CD14-positive monocyte (primary cell): ENCODE measurements at regions of chr6 and their contacts with region 1.

Region 1: GRCh38 chr6:1396952-1397868 is 7.8 kb downstream of the FOXF2 start:
- DNase-seq: peak; percentile 48 to 68 (median 53)
- H3K4me3 ChIP-seq: no peak overlapping the region
- H3K4me3 Mint-ChIP-seq: peak overlapping the region in 1 of 2 donors; percentile 83
- H3K27ac ChIP-seq: no peak overlapping the region
- H3K27ac Mint-ChIP-seq: no peak overlapping the region
- H3K4me1 ChIP-seq: peaks cover 0 to 6% of the 10 kb centered on the region in 2 donors
- H3K4me1 Mint-ChIP-seq: peaks cover 8% of the 10 kb centered on the region
- H3K27me3 ChIP-seq: peaks cover 67 to 92% of the 10 kb centered on the region in 2 donors
- H3K27me3 Mint-ChIP-seq: peaks cover 60 to 79% (median 69%) of the 10 kb centered on the region in 3 donors
- CTCF ChIP-seq: peak; percentile 95

Region 2: GRCh38 chr6:797479-798077 is 599.6 kb before region 1 on chr6:
- intact Hi-C with region 1: loop called in 1 of 2 experiments (anchors 10 kb)
- DNase-seq: peak; percentile 8 to 27 (median 26)
- H3K4me3 ChIP-seq: no peak overlapping the region
- H3K4me3 Mint-ChIP-seq: peak overlapping the region in 1 of 2 donors; percentile 60
- H3K27ac ChIP-seq: no peak overlapping the region
- H3K27ac Mint-ChIP-seq: no peak overlapping the region
- H3K4me1 ChIP-seq: no peaks in the 10 kb centered on the region
- H3K4me1 Mint-ChIP-seq: no peaks in the 10 kb centered on the region
- H3K27me3 ChIP-seq: peaks cover 29 to 44% of the 10 kb centered on the region in 2 donors
- H3K27me3 Mint-ChIP-seq: peaks cover 28 to 69% (median 37%) of the 10 kb centered on the region in 3 donors
- CTCF ChIP-seq: peak; percentile 78